ENCODE measurements at regions of chr9 and their contacts with region 1.

Region 1: GRCh38 chr9:92242260-92243136 is 51.0 kb downstream of the IARS1 start:
- DNase-seq: peak; percentile 63
- H3K4me3 ChIP-seq: no peak overlapping the region
- H3K27ac ChIP-seq: no peak overlapping the region
- H3K4me1 ChIP-seq: peaks cover 14% of the 10 kb centered on the region
- H3K27me3 ChIP-seq: no peaks in the 10 kb centered on the region
- CTCF ChIP-seq: peak; percentile 2 to 35

Region 2: GRCh38 chr9:92133949-92134604 is 108.4 kb before region 1 on chr9:
- CTCF ChIA-PET with region 1: no interaction called
- dilution Hi-C with region 1: no loop called
- in situ Hi-C with region 1: loop called in 1 of 2 experiments (anchors 25 kb)
- intact Hi-C with region 1: loop called (anchors 1 kb)
- DNase-seq: peak; percentile 80
- H3K4me3 ChIP-seq: peak overlapping the region in 1 of 3 experiments; percentile 31
- H3K27ac ChIP-seq: no peak overlapping the region
- H3K4me1 ChIP-seq: peaks cover 11% of the 10 kb centered on the region
- H3K27me3 ChIP-seq: no peaks in the 10 kb centered on the region
- CTCF ChIP-seq: peak; percentile 94 to 98

Region 3: GRCh38 chr9:92293452-92294296 is 51.2 kb after region 1 on chr9 and contains the start of gene IARS1:
- CTCF ChIA-PET with region 1: no interaction called
- dilution Hi-C with region 1: no loop called
- in situ Hi-C with region 1: loop called in 1 of 2 experiments (anchors 10 kb)
- intact Hi-C with region 1: loop called (anchors 5 kb)
- DNase-seq: peak; percentile 98
- H3K4me3 ChIP-seq: peak within 1 kb of the TSS; percentile 75 to 100 (median 99)
- H3K27ac ChIP-seq: peak within 1 kb of the TSS; percentile 95
- H3K4me1 ChIP-seq: peaks cover 35% of the 10 kb centered on the region
- H3K27me3 ChIP-seq: no peaks in the 10 kb centered on the region
- CTCF ChIP-seq: peak; percentile 5 to 38
- total RNA-seq, gene IARS1: 240 to 401 TPM

Measured in mammary epithelial cell (primary cell).